PC-9 (cell line): ENCODE measurements at regions of chr6 and their contacts with region 1.

Region 1: DNA sequence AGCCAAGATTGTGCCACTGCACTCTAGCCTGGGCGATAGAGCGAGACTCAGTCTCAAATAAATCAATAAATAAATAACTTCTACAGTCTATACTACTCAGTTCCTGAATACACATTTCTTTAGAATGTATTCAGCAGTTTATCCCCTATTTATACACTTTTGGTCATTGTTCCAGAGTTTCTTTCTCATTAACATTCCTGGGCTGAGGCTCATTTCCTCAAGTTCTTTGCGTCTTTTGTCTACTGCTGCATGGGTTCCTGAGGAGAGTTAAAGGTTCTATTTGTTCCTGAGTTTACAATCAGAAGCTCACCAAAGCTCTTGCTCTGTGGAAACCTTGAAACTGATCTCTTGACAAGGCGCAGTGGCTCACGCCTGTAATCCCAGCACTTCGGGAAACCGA is 37.7 kb upstream of the SASH1 start:
- DNase-seq: no peak
- H3K4me3 ChIP-seq: no peak overlapping the region
- H3K27ac ChIP-seq: no peak overlapping the region
- H3K4me1 ChIP-seq: peaks cover 34% of the 10 kb centered on the region
- H3K27me3 ChIP-seq: no peaks in the 10 kb centered on the region
- CTCF ChIP-seq: no peak

Region 2: GRCh38 chr6:148407372-148407771 is 102.4 kb after region 1 on chr6:
- CTCF ChIA-PET with region 1: no interaction called
- POLR2A ChIA-PET with region 1: no interaction called
- intact Hi-C with region 1: loop called (anchors 2 kb)
- DNase-seq: peak; percentile 9 to 86
- H3K4me3 ChIP-seq: no peak overlapping the region
- H3K27ac ChIP-seq: peak overlapping the region; percentile 47
- H3K4me1 ChIP-seq: peaks cover 45% of the 10 kb centered on the region
- H3K27me3 ChIP-seq: no peaks in the 10 kb centered on the region
- CTCF ChIP-seq: no peak

Region 3: DNA sequence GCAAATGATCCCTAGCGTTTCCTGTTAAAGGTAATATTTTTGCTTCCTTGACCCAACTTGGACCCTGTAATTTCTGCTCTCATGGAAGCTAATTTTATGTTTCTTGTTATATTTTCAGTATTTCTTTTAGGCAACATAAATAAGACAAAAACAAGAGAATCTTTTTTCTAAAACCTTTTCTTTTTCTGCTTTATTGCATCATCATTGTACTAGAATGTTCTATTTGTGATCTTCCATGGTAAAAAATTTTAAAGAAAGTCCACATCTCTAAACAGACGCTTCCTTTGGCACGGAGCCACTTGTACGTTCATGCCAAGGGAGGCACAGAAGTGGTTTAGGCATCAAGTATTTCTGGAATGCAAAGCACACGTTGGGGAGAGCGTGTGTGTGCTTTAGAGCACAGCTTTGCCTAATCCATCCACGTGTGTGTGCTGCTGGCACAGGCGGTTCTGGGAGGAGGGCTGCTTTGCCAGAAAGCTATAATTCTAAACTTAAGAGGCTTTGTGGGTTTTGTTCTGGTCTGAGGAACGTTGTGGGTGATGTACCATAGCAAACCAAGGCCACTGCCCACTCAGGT is 136.0 kb after region 1 on chr6:
- CTCF ChIA-PET with region 1: interaction called, 4 read pairs
- POLR2A ChIA-PET with region 1: no interaction called
- intact Hi-C with region 1: loop called (anchors 1 kb)
- DNase-seq: peak; percentile 59 to 91
- H3K4me3 ChIP-seq: no peak overlapping the region
- H3K27ac ChIP-seq: peak overlapping the region; percentile 85
- H3K4me1 ChIP-seq: peaks cover 58% of the 10 kb centered on the region
- H3K27me3 ChIP-seq: no peaks in the 10 kb centered on the region
- CTCF ChIP-seq: no peak